Activated CD4-positive, alpha-beta T cell treated with anti-CD3 and anti-CD28 coated beads, Interleukin-2, amount 10 ng/mL, durations not matched to agents 7 days and 5 days (primary cell): ENCODE measurements at regions of chr19 and their contacts with region 1.

Region 1: DNA sequence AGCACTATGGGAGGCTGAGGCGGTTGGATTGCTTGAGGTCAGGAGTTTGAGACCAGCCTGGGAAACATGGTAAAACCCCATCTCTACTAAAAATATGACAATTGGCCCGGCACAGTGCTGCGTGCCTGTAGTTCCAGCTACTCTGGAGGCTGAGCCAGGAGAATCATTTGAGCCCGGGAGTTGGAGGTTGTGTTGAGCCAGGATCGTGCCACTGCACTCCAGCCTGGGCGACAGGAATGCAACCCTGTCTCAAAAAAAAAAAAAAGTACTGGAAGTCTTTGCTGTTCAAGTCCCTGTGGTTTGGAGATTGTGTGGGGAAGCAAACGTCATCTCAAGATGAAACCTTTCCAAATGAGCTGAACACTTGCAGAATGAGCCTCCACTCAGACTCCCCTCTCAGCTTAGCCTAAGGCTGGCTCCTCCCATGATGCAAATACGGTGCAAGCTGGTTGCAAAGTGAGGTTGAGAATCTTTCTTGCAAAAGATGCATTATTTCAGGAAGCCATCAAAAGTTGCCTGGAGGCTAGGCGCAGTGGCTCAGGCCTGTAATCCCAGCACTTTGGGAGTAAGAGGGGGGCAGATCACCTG is 46.3 kb downstream of the MYO9B start:
- DNase-seq: no peak
- H3K4me3 Mint-ChIP-seq: no peak overlapping the region
- H3K27ac Mint-ChIP-seq: peak overlapping the region; percentile 68
- H3K4me1 Mint-ChIP-seq: peaks cover 48% of the 10 kb centered on the region
- H3K27me3 Mint-ChIP-seq: no peaks in the 10 kb centered on the region

Region 2: GRCh38 chr19:17103177-17103576 is 18.7 kb before region 1 on chr19:
- CTCF ChIA-PET with region 1: no interaction called
- POLR2A ChIA-PET with region 1: no interaction called
- DNase-seq: no peak
- H3K4me3 Mint-ChIP-seq: no peak overlapping the region
- H3K27ac Mint-ChIP-seq: no peak overlapping the region
- H3K4me1 Mint-ChIP-seq: peaks cover 29% of the 10 kb centered on the region
- H3K27me3 Mint-ChIP-seq: no peaks in the 10 kb centered on the region

Region 3: GRCh38 chr19:17159466-17160393 is 37.9 kb after region 1 on chr19:
- CTCF ChIA-PET with region 1: no interaction called
- POLR2A ChIA-PET with region 1: no interaction called
- DNase-seq: no peak
- H3K4me3 Mint-ChIP-seq: no peak overlapping the region
- H3K27ac Mint-ChIP-seq: peak overlapping the region; percentile 64
- H3K4me1 Mint-ChIP-seq: no peaks in the 10 kb centered on the region
- H3K27me3 Mint-ChIP-seq: no peaks in the 10 kb centered on the region

Region 4: DNA sequence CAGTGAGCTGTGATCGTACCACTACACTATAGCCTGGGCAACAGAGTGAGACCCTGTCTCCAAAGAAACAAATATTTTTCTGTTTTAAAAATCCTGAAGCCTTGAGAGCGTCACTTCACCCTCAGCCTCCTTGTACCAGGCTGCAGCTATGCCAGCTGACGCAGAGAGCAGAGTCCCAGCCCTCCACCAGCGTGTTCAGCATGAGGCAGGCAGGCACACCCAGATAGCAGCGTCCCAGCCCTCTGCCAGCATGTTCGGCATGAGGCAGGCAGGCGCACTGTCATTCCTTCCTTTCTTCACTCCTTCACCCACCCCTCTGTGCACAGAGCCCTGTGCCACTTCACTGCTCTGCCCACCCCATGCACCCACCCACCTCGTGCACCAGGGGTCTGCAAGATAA is 50.0 kb after region 1 on chr19:
- CTCF ChIA-PET with region 1: interaction called, 3 read pairs
- POLR2A ChIA-PET with region 1: interaction called, 13 read pairs
- DNase-seq: no peak
- H3K4me3 Mint-ChIP-seq: no peak overlapping the region
- H3K27ac Mint-ChIP-seq: no peak overlapping the region
- H3K4me1 Mint-ChIP-seq: no peaks in the 10 kb centered on the region
- H3K27me3 Mint-ChIP-seq: no peaks in the 10 kb centered on the region